ENCODE measurements at regions of chr3 and their contacts with region 1.

Region 1: DNA sequence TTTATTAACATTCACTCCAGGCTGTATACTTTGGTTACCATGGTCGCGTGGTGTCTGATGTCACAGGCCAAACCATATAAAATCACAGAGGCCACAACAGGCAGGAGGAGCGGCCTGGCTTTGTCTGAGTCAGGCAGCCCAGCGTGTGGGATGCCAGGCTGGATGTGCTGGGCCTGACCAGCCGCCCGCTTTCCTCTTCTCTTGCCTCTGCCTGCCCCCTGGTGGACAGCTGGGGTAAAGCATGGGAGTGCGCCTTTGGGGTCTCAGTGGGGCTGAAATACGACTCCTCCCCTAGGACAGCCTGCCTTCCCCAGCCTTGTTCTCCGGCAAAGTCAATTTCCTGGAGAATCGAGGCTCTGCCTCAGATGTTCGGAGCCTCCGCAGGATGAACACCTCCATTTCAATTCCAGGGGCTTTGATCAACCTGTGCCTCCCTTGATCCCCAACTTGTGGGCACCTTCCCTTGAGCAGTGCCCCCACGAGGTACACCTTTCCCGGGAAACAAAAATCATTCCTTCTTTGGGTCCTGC is 78.2 kb downstream of the CCNL1 start:
- DNase-seq: peak; percentile 69
- ATAC-seq: peak; percentile 98
- H3K4me3 ChIP-seq: no peak overlapping the region
- H3K27ac ChIP-seq: peak overlapping the region; percentile 65; the same call in 1 of the 2 replicates
- H3K4me1 ChIP-seq: peaks cover 11% of the 10 kb centered on the region
- H3K27me3 ChIP-seq: no peaks in the 10 kb centered on the region
- CTCF ChIP-seq: peak; percentile 98

Region 2: GRCh38 chr3:156299569-156299968 is 782.2 kb before region 1 on chr3:
- CTCF ChIA-PET with region 1: no interaction called
- POLR2A ChIA-PET with region 1: interaction called, 12 read pairs
- in situ Hi-C with region 1: no loop called
- intact Hi-C with region 1: no loop called
- DNase-seq: no peak
- ATAC-seq: no peak
- H3K4me3 ChIP-seq: no peak overlapping the region
- H3K27ac ChIP-seq: no peak overlapping the region
- H3K4me1 ChIP-seq: no peaks in the 10 kb centered on the region
- H3K27me3 ChIP-seq: no peaks in the 10 kb centered on the region; the same call in 1 of the 2 replicates
- CTCF ChIP-seq: no peak

Region 3: DNA sequence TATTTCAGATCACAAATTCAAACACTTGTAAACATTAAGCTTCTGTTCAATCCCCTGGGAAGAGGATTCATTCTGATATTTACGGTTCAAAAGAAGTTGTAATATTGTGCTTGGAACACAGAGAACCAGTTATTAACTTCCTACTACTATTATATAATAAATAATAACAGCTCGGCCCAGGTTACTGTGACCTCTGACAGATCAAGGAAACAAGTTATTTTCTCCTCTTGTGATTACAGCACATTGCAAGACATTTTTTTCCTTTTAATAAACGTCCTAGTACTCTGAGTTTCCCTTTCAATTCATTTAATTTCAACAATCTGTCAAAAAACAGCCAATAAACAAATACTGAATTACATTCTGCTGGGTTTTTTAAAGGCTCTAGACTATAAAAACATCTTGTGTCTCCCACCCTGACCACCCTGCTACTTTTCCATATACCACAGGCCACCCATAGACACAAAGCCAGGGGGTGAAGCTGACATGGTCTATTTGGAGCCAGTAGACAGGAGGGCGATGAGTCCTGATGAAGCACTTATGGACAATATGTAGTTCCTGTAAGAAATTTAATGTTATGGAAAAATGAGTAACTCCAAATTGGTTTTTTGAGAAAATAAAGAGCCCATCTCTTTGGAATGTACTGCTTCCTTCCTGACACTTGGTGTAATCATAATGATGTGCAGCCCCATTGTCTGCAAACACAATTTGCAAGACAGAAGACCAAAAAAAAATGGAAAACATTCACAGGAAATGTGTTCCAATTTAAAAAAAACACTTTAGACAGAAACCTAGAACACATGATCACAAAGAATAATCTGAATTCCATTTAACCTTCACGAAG is 538.8 kb before region 1 on chr3:
- CTCF ChIA-PET with region 1: no interaction called
- POLR2A ChIA-PET with region 1: interaction called, 3 read pairs
- in situ Hi-C with region 1: no loop called
- intact Hi-C with region 1: loop called (anchors 5 kb)
- DNase-seq: no peak
- ATAC-seq: no peak
- H3K4me3 ChIP-seq: no peak overlapping the region
- H3K27ac ChIP-seq: no peak overlapping the region
- H3K4me1 ChIP-seq: no peaks in the 10 kb centered on the region
- H3K27me3 ChIP-seq: no peaks in the 10 kb centered on the region
- CTCF ChIP-seq: no peak

Region 4: DNA sequence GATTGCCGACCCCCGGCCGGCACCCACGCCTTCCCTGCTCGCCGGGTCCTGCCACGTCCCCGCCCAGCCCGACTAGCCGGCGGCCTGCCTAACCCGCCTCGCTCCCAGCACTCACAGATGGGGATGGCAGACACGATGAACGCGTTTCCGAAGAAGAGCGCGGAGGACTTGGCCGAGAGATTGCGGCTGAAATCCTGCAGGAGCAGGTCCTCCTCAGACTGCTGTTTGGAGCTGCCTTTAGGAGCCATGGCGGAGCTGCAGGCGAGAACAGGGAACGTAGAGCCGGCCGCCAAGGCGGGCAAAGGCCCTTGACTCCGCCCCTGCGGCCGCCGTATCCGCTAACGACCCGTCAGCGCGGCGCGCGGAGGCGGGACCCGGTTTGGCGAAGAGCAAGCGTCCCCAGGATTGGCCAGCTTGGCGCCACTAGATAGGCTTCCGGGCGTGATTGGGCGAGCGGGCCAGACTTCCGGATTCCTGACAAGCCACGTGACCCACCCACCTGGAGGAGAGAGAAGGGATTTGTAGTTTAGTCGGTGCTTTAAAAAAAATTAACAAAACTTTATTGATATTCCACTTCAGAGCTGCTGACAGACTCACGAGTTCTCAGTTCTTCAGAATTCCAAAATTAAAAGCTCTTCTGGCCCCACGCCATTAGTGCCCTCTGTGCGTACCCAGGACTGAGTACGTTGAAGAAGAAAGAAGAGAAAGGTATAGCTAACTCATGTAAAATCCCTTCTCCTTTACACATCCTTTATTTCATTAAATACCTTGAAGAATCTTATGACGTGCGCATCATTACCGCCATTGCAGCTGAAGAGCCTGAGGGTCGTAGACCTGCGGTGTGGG is 526.7 kb before region 1 on chr3 and contains the start of gene SSR3:
- CTCF ChIA-PET with region 1: no interaction called
- POLR2A ChIA-PET with region 1: no interaction called
- in situ Hi-C with region 1: no loop called
- intact Hi-C with region 1: loop called (anchors 2 kb)
- DNase-seq: peak; percentile 93
- ATAC-seq: peak; percentile 100
- H3K4me3 ChIP-seq: peak within 1 kb of the TSS; percentile 67 to 73
- H3K27ac ChIP-seq: peak within 1 kb of the TSS; percentile 87
- H3K4me1 ChIP-seq: peaks cover 12% of the 10 kb centered on the region; the same call in 1 of the 2 replicates
- H3K27me3 ChIP-seq: no peaks in the 10 kb centered on the region
- CTCF ChIP-seq: no peak
- total RNA-seq, gene SSR3: 154 TPM

Region 5: DNA sequence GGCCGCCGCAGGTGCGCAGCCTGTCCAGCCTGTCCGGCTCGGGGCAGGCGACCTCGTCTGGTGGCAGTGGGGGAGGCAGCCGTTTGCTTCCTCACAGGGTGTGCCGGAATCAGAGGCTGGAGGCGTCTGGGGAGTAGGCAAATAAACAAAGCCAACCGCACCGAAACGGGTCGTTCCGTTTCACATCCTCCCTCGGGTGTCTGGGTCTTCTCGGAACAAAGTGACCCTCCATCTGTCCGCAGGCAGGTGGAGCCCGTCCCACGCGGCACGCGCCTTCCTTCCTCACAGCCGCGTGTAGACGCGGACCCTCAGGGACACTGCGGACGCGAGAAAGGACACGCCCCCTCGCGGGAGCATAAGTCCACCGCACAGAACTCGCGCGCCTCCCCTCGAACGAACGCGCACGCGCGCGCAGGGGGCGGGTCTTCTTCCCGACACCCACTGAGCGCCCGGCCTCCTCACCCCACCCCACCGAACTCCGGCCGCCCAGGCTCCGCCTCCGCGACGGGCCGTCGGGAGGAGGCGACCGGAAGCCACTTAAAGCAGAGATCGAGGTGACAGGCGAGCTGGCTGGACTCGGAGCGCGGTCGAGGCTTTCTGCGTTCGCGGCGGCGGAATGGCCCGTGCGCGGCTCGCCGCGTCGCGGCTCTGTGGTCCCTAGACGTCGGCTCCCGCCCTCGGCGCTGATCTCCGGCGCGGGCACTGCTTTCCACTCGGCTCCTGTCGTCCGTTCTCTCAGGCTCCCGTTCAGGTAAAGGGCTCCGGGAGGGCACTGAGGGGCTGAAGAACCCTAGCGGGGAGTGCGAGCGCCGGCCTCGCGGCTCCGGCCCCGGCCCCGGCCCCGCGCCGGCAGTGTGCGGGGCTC is 407.5 kb before region 1 on chr3 and contains the start of gene TIPARP:
- CTCF ChIA-PET with region 1: interaction called, 6 read pairs
- POLR2A ChIA-PET with region 1: interaction called, 3 read pairs
- in situ Hi-C with region 1: no loop called
- intact Hi-C with region 1: loop called (anchors 2 kb)
- DNase-seq: peak; percentile 93
- ATAC-seq: peak; percentile 90
- H3K4me3 ChIP-seq: peak within 1 kb of the TSS; percentile 84 to 89
- H3K27ac ChIP-seq: peak within 1 kb of the TSS; percentile 86
- H3K4me1 ChIP-seq: peaks cover 27% of the 10 kb centered on the region
- H3K27me3 ChIP-seq: no peaks in the 10 kb centered on the region
- CTCF ChIP-seq: peak; percentile 93
- total RNA-seq, gene TIPARP: 22.1 TPM

Region 6: DNA sequence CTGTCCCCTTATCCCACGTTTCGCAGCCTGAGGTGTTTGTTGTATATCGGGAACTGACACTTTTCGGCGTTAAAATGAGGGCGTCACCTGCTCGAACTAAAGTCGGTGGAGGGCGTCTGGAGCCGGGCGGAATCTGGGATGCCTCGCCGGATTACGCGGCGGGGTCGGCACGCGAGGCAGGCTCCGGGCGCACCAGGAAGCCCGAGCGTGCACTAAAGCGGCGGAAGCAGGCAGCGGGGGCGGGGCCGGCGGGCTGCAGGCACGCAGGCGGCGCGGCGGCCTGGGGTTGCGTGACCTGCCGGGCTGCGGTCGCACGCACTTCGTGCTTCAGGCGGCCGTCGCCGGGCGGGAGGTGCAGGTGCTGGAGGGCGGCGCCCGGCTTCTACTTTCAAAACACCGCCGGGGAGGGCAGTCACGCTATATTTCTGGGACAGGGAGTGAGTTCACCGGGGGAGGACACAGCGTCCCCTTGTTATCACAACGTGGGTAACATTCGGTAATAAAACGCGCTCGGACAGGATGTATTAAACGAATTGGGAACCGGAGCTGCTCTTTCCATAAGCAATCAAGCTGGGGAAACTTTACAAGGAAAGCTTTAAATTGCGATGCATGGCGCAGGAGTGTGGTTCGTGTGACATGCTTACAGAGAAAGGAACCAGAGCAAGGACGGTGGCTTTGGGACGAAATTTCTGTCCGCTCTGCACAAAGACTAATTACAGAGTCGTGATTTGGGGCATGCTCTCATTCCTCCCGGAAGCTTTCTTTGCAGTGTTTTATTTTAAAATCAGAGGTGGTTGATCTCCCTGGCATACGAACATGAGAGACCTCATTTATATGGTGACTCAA is 264.7 kb before region 1 on chr3:
- CTCF ChIA-PET with region 1: interaction called, 3 read pairs
- POLR2A ChIA-PET with region 1: no interaction called
- in situ Hi-C with region 1: no loop called
- intact Hi-C with region 1: loop called (anchors 5 kb)
- DNase-seq: peak; percentile 83
- ATAC-seq: peak; percentile 88
- H3K4me3 ChIP-seq: peak overlapping the region; percentile 60 to 86
- H3K27ac ChIP-seq: peak overlapping the region; percentile 97
- H3K4me1 ChIP-seq: peaks cover 51% of the 10 kb centered on the region
- H3K27me3 ChIP-seq: no peaks in the 10 kb centered on the region
- CTCF ChIP-seq: peak; percentile 40

Region 7: GRCh38 chr3:157042226-157042625 is 39.5 kb before region 1 on chr3:
- CTCF ChIA-PET with region 1: no interaction called
- POLR2A ChIA-PET with region 1: no interaction called
- in situ Hi-C with region 1: no loop called
- intact Hi-C with region 1: no loop called
- DNase-seq: no peak
- ATAC-seq: no peak
- H3K4me3 ChIP-seq: no peak overlapping the region
- H3K27ac ChIP-seq: no peak overlapping the region
- H3K4me1 ChIP-seq: no peaks in the 10 kb centered on the region
- H3K27me3 ChIP-seq: no peaks in the 10 kb centered on the region; the same call in 1 of the 2 replicates
- CTCF ChIP-seq: no peak